Activated naive CD4-positive, alpha-beta T cell treated with anti-CD3 and anti-CD28 coated beads for 36 hours (primary cell): ENCODE measurements at regions of chr9 and their contacts with region 1.

Region 1: DNA sequence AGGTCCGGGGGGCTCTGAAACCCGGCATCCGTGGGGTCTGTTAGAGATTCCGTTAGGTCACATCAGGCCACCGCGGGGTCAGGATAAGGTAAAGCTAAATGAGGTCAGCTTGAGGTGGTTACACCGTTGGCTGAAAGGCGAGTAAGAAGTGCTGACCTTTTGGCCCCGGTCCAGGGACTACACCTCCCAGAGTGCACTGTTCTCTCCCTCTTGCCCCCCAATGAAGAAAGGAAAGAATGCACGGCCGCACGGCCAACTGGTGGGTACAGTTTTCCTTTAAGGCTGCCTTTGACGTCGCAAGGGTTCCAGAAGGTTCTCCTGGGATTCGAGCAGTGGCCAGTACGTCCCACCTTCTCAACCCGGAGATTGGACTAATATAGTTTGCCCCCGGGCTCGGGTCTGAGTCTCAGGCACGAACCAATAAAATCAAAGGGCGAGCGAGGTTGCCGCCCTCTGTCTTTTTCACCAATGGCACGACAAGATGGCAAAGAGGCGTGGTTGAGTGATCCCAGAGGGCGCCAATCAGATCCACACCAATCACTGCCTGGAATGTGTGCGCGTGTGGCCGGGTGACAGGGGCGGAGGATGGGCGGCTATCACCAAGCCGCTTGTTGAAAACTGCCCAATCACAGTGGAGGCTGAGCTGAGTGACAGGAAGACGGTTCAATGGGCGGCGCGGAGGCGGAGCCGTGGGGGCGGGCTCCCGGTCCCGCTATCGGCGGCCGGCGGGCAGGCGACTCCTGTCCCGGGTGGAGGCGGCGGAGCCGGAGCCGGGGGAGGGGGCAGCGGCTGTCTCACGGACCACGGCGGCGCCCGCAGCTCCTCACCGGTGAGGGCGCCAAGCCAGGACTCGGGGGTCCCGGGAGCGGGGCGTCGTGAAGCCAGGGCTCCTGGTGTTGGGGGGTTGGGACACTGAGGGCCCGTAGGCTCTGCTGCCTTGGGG is at the start of gene DNAJB5:
- DNase-seq: peak; percentile 99
- H3K4me3 Mint-ChIP-seq: peak within 1 kb of the TSS; percentile 90
- H3K27ac Mint-ChIP-seq: peak within 1 kb of the TSS; percentile 92
- H3K4me1 Mint-ChIP-seq: peaks cover 85% of the 10 kb centered on the region
- H3K27me3 Mint-ChIP-seq: no peaks in the 10 kb centered on the region
- total RNA-seq, gene DNAJB5: 11.4 to 12.0 TPM

Region 2: GRCh38 chr9:34376596-34377403 is 612.5 kb before region 1 on chr9 and contains the start of gene MYORG:
- CTCF ChIA-PET with region 1: no interaction called
- intact Hi-C with region 1: loop called (anchors 5 kb)
- DNase-seq: peak; percentile 97
- H3K4me3 Mint-ChIP-seq: peak within 1 kb of the TSS; percentile 80
- H3K27ac Mint-ChIP-seq: no peak within 1 kb of the TSS
- H3K4me1 Mint-ChIP-seq: peaks cover 30% of the 10 kb centered on the region
- H3K27me3 Mint-ChIP-seq: no peaks in the 10 kb centered on the region
- total RNA-seq, gene MYORG: 1.1 to 2.0 TPM

Region 3: DNA sequence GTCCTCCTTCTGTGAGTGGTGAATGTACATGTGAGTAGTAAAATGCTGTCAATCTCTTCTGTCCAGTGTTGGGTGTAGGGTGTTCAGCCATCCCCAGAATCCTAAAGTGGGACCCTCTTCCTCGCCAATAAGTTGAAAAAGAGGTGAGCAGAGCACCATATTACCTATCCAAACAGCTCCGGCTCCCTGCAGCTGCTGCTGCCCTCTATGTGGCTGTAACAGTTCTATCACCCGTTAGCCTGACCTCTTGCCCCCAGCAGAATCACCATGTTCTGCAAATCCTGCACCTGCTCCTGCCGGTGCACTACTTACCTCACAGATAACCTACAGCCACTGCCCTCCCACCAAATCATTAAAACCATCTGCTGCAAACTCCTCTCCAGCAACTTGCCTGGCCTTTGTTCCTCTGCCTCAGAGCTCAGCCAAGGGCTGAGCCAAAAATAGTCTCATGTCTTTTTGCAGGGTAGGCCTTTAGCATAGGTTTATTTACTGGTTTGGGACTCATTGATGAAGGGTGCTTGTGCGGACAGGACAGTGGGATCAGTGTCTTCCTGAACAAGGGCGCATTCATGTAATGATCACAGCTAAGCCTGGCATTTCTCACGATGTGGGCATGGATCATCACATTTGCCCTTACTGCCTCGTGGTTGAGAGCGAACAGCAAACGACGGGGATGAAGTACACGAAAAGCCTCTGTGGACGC is 229.7 kb before region 1 on chr9:
- CTCF ChIA-PET with region 1: interaction called, 3 read pairs
- intact Hi-C with region 1: loop called (anchors 2 kb)
- DNase-seq: no peak
- H3K4me3 Mint-ChIP-seq: no peak overlapping the region
- H3K27ac Mint-ChIP-seq: no peak overlapping the region
- H3K4me1 Mint-ChIP-seq: peaks cover 2% of the 10 kb centered on the region
- H3K27me3 Mint-ChIP-seq: peaks cover 32% of the 10 kb centered on the region

Region 4: DNA sequence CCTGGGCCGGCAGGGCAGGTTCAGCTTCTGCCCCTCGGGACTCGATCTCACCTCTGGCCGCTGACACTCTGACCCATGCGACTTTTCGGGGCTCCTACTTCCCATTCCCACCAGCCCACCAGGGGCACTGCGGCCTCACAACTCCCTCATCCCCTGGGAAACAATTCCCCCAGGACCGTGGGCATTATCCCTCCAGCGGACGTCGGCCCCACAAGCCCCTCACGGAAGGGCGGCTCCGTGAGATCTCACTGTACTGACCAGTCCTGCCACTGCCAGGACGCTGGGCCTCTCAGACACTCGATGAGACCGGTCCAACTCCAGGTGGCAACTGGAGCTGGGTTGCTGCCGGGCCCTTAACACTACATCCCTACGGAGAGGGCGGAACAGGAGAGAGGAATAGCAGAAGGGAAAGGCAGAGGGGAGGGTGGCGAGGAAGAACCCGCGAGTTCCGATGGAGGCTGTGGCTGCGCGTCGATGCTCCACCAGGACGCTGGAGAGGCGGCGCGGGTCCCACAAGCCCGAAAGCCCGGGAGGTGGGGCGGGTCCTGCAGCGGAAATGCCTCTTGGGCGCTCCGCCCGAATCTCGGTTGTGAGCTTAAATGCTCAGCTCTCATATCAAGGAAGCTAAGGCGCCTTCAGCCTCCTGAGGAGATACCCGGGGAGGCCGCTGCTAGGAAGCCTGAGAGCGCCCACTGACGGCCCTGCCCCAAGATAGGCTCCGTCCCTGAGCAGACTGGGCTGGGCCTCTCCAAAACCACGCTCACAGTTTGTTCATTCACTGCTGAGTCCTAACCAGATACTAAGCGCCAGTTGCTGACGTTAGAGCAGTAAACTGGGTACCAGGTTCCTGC is 46.8 kb after region 1 on chr9:
- CTCF ChIA-PET with region 1: interaction called, 3 read pairs
- intact Hi-C with region 1: loop called (anchors 2 kb)
- DNase-seq: peak; percentile 70
- H3K4me3 Mint-ChIP-seq: peak overlapping the region; percentile 37
- H3K27ac Mint-ChIP-seq: peak overlapping the region; percentile 31
- H3K4me1 Mint-ChIP-seq: peaks cover 8% of the 10 kb centered on the region
- H3K27me3 Mint-ChIP-seq: no peaks in the 10 kb centered on the region

Region 5: DNA sequence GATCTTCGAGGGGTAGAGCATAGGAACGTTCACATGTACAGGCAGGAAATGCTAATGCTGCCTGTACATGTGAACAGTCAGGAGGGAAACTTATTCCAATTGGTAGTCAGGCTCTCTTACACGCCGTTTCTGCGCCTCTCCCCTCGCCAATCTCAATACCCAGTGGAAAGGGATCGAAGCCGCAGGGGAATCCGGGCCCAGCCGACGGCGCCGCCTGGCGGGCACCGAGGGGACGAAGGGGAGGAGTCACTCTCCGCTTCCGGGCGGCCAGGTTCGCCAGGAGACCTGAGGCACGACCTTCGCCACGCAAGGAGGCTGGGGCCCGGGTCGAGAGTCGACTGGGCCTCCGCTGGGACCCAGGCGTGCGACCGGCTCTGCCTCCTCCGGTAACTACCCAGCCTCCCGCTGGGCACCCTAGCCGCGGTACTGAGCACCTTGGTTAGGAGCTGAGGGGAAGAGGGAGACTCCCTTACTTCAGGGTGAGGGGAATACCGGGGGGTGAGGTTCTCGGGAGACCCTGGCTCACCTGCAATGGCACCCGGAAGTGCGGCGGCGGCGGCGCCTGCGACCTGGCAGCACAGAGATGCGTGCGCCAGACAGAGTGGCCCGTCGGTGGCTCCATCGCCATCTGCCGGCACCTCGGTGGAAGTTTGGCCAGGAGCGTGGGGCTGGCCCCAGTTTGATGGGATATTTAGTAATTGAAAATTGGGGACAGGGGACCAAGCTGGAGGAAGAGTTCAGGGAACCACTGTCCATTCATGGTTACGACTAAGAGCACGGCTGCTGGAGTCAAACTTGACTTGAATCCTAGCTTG is 107.0 kb after region 1 on chr9 and contains the start of gene PIGO:
- CTCF ChIA-PET with region 1: no interaction called
- intact Hi-C with region 1: loop called (anchors 1 kb)
- DNase-seq: peak; percentile 92
- H3K4me3 Mint-ChIP-seq: peak within 1 kb of the TSS; percentile 83
- H3K27ac Mint-ChIP-seq: peak within 1 kb of the TSS; percentile 91
- H3K4me1 Mint-ChIP-seq: peaks cover 37% of the 10 kb centered on the region
- H3K27me3 Mint-ChIP-seq: no peaks in the 10 kb centered on the region
- total RNA-seq, gene PIGO: 22.8 to 23.7 TPM

Region 6: GRCh38 chr9:35161713-35162604 is 172.7 kb after region 1 on chr9 and contains the start of gene UNC13B:
- CTCF ChIA-PET with region 1: interaction called, 3 read pairs
- intact Hi-C with region 1: loop called (anchors 5 kb)
- DNase-seq: peak; percentile 83
- H3K4me3 Mint-ChIP-seq: peak within 1 kb of the TSS; percentile 88
- H3K27ac Mint-ChIP-seq: no peak within 1 kb of the TSS
- H3K4me1 Mint-ChIP-seq: peaks cover 25% of the 10 kb centered on the region
- H3K27me3 Mint-ChIP-seq: peaks cover 3% of the 10 kb centered on the region
- total RNA-seq, gene UNC13B: 5.4 to 6.4 TPM